ENCODE measurements at regions of chr1 and their contacts with region 1.

Region 1: GRCh38 chr1:222792744-222793143 is 22.1 kb upstream of the DISP1 start:
- DNase-seq: no peak
- H3K4me3 Mint-ChIP-seq: no peak overlapping the region
- H3K27ac Mint-ChIP-seq: no peak overlapping the region
- H3K4me1 Mint-ChIP-seq: peaks cover 15% of the 10 kb centered on the region
- H3K27me3 Mint-ChIP-seq: no peaks in the 10 kb centered on the region

Region 2: DNA sequence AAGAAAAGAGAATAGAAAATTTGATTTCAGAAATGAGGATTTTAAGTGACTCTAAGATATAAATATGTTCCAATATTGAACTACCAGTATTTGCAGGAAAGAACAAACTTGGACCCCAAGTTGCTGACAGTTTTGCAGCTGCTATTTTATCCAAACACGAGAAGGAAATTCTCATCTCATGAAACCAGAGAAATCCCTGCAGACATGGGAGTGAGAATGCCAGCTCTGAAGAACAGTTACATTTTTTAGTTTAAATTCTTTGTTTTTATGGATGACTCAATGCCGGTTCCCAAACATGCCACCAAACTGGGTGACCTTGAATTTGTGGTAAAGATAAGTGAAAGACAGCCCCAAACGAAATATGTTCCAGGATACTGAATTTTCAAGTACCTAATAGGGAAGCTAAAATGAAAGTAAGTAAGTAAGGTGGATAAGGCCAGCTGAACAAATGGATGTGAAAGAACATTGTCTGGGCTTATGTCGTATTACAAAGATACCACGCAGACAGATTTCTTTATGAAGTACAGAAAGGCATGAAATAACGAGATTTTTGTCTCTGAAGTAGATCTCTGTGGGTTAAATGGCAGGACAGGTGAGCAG is 330.4 kb after region 1 on chr1:
- intact Hi-C with region 1: loop called (anchors 5 kb)
- DNase-seq: no peak
- H3K4me3 Mint-ChIP-seq: no peak overlapping the region
- H3K27ac Mint-ChIP-seq: no peak overlapping the region
- H3K4me1 Mint-ChIP-seq: peaks cover 5% of the 10 kb centered on the region
- H3K27me3 Mint-ChIP-seq: peaks cover 4% of the 10 kb centered on the region

Measured in activated T-helper 2 cell treated with anti-CD3 and anti-CD28 coated beads, Interferon-gamma antibody, Interleukin-2, Interleukin-4, amounts not matched to agents 10 μg/mL and 5 μg/mL and 100 μg/mL, durations not matched to agents 14 hours and 24 hours and 36 hours (primary cell).